ENCODE measurements at regions of chr3 and their contacts with region 1.

Region 1: DNA sequence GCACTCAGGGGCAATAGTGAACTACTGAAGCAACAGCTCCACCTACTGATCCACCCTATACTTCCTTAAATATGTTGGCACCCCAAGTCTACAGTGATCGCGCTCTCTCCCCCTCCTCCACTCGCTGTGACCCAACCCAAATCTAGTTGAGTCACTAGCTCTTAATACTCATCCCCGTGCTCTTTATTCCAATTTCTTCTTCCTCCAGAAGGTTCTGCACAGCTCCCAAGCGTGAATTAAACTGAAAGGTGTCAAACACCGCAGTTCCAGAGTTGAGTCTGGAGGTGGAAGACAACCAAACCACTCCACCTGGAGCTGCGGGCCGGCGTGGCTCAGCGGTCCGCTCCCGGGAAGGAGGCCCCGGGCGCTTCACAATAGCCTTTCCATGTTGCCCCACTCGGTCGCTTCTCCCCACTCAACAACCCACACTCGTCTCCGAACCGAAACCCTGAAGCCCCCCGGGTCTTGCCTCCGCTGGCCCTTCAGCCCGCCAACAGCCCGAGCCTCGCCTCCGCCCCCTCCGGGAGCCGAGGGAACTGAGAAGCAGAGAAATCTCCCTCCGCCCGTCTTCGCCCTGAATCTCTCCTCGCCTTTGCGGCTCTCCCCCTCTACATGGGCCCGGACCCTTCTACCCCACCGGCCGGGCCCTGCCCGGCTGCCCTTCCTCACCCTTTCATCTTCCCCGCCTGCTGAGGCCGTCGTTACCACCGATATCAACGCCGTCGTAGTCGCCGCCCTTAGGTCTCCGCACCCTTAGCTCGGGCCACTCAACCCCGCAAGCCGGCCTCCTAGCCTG is 578 bp downstream of the NAA50 start:
- DNase-seq: peak; percentile 82
- H3K4me3 ChIP-seq: peak overlapping the region; percentile 94 to 99
- H3K27ac ChIP-seq: peak overlapping the region; percentile 100
- H3K4me1 ChIP-seq: peaks cover 6 to 16% of the 10 kb centered on the region in 2 experiments; a peak in 3 of 4 replicates
- H3K27me3 ChIP-seq: no peaks in the 10 kb centered on the region
- CTCF ChIP-seq: peak; percentile 69
- EP300 ChIP-seq: no peak
- RAD21 ChIP-seq: peak; percentile 70

Region 2: DNA sequence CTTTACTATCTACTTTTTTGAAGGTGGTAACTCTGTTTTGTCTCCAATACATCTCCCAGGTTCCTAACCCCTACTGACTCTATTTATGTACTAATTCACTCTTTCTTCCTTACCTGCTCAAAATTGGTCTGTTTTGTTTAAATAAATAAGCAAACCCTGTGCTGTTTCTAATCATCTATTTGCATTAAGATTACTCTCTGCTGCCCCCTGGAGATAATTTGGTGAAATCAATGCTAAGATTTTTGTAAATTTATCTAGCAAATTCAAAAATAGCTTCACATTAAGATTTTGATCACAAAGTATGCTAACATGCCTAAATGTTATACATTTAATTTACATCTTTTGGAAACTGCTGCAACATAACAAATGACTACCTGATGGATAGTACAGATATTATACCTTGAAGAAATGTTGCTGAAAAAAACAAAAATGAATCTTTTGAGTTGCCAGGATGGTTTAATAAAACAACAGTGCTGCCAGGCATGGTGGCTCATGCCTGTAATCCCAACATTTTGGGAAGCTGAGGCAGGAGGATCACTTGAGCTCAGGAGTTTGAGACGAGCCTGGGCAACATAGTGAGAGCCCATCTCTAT is 766.1 kb before region 1 on chr3:
- CTCF ChIA-PET with region 1: no interaction called
- POLR2A ChIA-PET with region 1: no interaction called
- DNase-seq: peak; percentile 16
- H3K4me3 ChIP-seq: no peak overlapping the region; a peak in 1 of 4 replicates
- H3K27ac ChIP-seq: no peak overlapping the region
- H3K4me1 ChIP-seq: no peaks in the 10 kb centered on the region; a peak in 1 of 4 replicates
- H3K27me3 ChIP-seq: no peaks in the 10 kb centered on the region
- CTCF ChIP-seq: peak; percentile 84
- EP300 ChIP-seq: no peak
- RAD21 ChIP-seq: peak; percentile 77

Region 3: GRCh38 chr3:113721636-113722035 is 23.8 kb before region 1 on chr3:
- CTCF ChIA-PET with region 1: interaction called, 10 read pairs
- POLR2A ChIA-PET with region 1: no interaction called
- DNase-seq: no peak
- H3K4me3 ChIP-seq: no peak overlapping the region
- H3K27ac ChIP-seq: no peak overlapping the region
- H3K4me1 ChIP-seq: peaks cover 0 to 5% of the 10 kb centered on the region in 2 experiments; a peak in 1 of 4 replicates
- H3K27me3 ChIP-seq: no peaks in the 10 kb centered on the region
- CTCF ChIP-seq: no peak
- EP300 ChIP-seq: no peak
- RAD21 ChIP-seq: no peak

Region 4: DNA sequence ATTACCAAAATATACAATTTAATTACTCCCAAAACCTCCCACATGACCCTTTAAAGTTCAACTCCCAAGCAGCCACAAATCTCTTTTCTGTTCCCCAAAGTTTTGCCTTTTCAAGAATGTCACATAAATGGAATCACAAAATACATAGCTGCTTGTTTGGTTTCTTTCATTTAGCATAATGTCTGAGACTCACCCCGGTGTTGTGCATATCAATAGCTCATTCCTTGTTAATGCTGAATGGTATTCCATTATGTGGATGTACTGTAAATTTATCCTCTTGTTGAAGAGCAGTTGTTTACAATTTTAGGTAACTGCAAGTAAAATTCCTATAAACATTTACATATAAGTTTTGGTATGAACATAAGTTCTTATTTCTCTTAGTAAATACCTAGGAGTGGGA is 14.9 kb before region 1 on chr3:
- CTCF ChIA-PET with region 1: interaction called, 42 read pairs
- POLR2A ChIA-PET with region 1: no interaction called
- DNase-seq: no peak
- H3K4me3 ChIP-seq: no peak overlapping the region
- H3K27ac ChIP-seq: no peak overlapping the region
- H3K4me1 ChIP-seq: no peaks in the 10 kb centered on the region; a peak in 1 of 4 replicates
- H3K27me3 ChIP-seq: no peaks in the 10 kb centered on the region
- CTCF ChIP-seq: no peak
- EP300 ChIP-seq: no peak
- RAD21 ChIP-seq: no peak